Left colon (tissue), 2 donors: ENCODE measurements at regions of chr3 and their contacts with region 1.

Region 1: DNA sequence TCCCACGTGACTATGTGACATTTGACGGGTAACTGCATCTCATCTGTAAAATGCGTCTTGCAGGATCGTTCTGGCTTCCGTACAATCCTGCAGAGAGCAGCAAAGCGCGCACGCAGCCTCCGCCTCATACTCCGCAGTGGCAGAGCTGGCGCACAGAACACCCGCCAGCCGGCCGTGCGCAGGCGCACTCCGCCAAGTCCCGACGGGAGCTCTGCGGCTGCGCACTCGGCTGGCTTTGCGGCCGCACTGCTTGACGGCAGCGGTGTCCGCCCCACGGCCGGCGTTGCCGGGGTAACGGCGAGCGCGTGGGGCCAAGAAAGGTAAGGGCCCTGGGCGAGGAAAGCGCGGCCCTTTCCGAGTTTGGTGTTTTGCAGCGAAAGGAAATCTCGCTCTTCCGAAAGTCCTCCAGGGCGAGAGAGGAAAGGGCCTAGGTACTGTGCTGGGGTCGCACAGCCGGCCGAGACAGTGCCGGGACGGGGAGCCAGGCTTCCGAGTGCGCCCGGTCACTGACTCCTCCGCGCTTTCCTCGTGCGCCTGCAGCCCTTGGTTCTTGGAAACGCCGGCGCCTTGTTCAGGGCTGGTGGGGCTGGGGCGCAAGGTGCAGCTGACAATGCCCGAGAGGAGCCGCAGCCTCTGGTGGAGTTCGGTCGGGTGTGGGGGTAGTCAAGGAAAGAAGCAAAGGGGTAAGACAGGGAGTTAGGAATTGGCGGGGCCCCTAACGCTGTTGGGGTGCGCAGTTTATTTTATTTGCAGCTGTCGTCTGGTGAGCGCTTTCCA is at the start of gene TSEN2:
- DNase-seq: peak; percentile 93 to 96
- ATAC-seq: peak; percentile 69
- total RNA-seq, gene TSEN2: 17.7 to 18.4 TPM

Region 2: GRCh38 chr3:12135029-12135657 is 349.2 kb before region 1 on chr3:
- intact Hi-C with region 1: loop called (anchors 5 to 10 kb)
- DNase-seq: peak; percentile 39 to 80
- ATAC-seq: peak; percentile 88

Region 3: DNA sequence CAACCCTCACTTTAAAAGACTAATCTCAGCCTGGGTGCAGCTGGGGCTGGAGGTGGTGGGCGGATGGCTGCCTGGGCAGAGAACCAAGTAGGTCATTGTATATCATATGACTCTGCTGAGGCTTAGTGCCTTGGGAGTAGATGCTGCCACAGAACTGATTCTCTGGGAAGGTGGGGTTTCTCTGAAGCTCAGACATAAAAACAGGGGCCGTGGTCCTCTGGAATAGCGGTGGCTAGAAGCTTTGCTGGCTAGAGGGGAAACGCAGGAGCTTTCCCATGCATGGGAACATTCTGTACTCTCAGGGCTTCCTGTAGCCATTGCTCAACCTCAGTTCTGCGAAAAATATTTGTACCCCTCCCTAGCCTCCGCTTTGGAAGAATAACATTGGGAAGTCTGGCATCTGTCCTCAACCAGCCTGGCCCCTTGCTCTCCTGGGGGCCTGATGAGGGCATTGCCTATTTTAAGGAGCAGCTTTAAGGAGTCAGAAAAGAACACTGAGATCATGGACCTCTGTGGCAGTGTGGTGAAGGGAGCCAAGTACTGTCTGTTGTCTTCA is 340.4 kb before region 1 on chr3:
- intact Hi-C with region 1: loop called (anchors 5 to 10 kb)
- DNase-seq: no peak
- ATAC-seq: no peak

Region 4: DNA sequence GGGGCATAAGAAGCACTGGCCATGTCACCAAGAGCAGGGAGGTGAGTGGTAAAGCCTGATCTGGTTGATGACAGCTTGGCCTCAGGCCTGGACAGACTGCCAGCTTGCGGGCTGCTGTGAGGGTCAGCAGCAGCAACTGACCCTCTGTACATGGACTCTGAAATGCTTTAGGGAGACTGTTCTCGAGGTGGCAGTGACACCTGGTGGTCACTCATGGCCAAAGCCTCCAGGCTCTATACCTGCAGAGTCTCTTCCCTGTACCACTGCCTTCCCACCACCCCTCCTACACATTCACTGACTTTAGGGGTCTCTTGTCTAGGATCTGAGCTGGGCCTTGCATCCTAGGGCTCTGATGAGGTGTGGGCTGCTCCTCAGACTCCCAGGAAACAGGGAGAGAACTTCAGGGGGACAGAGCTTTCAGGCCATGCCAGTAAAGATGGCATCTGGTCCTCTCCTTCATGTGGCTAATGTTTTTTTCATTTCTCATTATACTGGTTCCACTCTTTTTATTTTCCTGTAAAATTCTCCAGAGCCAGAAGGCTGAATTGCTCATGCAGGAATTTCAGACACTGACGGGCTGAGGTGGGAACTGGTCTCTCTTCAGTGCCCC is 308.4 kb before region 1 on chr3:
- intact Hi-C with region 1: loop called in 1 of 2 experiments (anchors 5 kb)
- DNase-seq: peak in 1 of 2 donors; percentile 74
- ATAC-seq: peak; percentile 66

Region 5: GRCh38 chr3:12363397-12364195 is 120.8 kb before region 1 on chr3:
- intact Hi-C with region 1: no loop called
- DNase-seq: no peak
- ATAC-seq: no peak